K562 (cell line): ENCODE measurements at regions of chr17 and their contacts with region 1.

Region 1: DNA sequence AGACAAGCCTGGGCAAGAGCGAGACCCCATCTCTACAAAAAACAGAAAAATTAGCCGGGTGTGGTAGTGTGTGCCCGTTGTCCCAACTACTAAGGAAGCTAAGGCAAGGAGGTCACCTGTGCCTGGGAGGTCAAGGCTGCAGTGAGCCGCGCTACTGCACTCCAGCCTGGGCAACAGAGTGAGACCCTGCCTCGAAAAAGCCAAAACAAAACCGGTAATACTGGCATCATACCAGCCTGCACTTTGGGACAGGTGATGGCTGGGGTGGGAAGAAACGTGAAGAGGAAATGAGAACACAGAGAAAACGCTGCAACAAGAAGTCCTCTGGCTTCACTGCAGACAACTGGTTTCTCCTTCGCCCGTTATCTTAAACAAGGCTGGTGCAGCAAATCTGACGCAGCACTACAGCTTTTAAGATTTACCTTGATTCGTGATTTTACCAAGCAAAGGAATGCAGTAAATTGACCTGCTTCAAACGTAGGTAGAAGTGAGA is 725 bp upstream of the CASC3 start:
- DNase-seq: peak in 1 of 4 experiments; percentile 18
- ATAC-seq: peak; percentile 17
- H3K4me3 ChIP-seq: peak overlapping the region; percentile 97
- H3K27ac ChIP-seq: peak overlapping the region; percentile 99
- H3K4me1 ChIP-seq: peaks cover 9 to 11% of the 10 kb centered on the region in 2 experiments; a peak in 4 of 5 replicates
- H3K27me3 ChIP-seq: no peaks in the 10 kb centered on the region
- CTCF ChIP-seq: no peak
- EP300 ChIP-seq: no peak
- POLR2A ChIP-seq: no peak
- RAD21 ChIP-seq: no peak

Region 2: GRCh38 chr17:40121181-40122135 is 18.2 kb before region 1 on chr17 and contains the start of gene MSL1:
- CTCF ChIA-PET with region 1: no interaction called
- POLR2A ChIA-PET with region 1: interaction called, 57 read pairs
- in situ Hi-C with region 1: no loop called
- intact Hi-C with region 1: no loop called
- DNase-seq: peak; percentile 86 to 95 (median 94)
- ATAC-seq: peak; percentile 77
- H3K4me3 ChIP-seq: peak within 1 kb of the TSS; percentile 81
- H3K27ac ChIP-seq: peak within 1 kb of the TSS; percentile 95
- H3K4me1 ChIP-seq: peaks cover 15 to 25% of the 10 kb centered on the region in 2 experiments; a peak in 4 of 5 replicates
- H3K27me3 ChIP-seq: no peaks in the 10 kb centered on the region
- CTCF ChIP-seq: no peak
- EP300 ChIP-seq: no peak
- POLR2A ChIP-seq: peak; percentile 64
- RAD21 ChIP-seq: no peak
- polyA plus RNA-seq, gene MSL1: 13.8 to 13.9 TPM

Region 3: GRCh38 chr17:40151414-40151963 is 11.9 kb after region 1 on chr17:
- CTCF ChIA-PET with region 1: no interaction called
- POLR2A ChIA-PET with region 1: interaction called, 10 read pairs
- in situ Hi-C with region 1: no loop called
- intact Hi-C with region 1: no loop called
- DNase-seq: no peak
- ATAC-seq: no peak
- H3K4me3 ChIP-seq: no peak overlapping the region
- H3K27ac ChIP-seq: no peak overlapping the region
- H3K4me1 ChIP-seq: peaks cover 8% of the 10 kb centered on the region in 2 experiments
- H3K27me3 ChIP-seq: no peaks in the 10 kb centered on the region
- CTCF ChIP-seq: no peak
- EP300 ChIP-seq: no peak
- POLR2A ChIP-seq: no peak
- RAD21 ChIP-seq: no peak